ENCODE measurements at regions of chr1 and their contacts with region 1.

Region 1: DNA sequence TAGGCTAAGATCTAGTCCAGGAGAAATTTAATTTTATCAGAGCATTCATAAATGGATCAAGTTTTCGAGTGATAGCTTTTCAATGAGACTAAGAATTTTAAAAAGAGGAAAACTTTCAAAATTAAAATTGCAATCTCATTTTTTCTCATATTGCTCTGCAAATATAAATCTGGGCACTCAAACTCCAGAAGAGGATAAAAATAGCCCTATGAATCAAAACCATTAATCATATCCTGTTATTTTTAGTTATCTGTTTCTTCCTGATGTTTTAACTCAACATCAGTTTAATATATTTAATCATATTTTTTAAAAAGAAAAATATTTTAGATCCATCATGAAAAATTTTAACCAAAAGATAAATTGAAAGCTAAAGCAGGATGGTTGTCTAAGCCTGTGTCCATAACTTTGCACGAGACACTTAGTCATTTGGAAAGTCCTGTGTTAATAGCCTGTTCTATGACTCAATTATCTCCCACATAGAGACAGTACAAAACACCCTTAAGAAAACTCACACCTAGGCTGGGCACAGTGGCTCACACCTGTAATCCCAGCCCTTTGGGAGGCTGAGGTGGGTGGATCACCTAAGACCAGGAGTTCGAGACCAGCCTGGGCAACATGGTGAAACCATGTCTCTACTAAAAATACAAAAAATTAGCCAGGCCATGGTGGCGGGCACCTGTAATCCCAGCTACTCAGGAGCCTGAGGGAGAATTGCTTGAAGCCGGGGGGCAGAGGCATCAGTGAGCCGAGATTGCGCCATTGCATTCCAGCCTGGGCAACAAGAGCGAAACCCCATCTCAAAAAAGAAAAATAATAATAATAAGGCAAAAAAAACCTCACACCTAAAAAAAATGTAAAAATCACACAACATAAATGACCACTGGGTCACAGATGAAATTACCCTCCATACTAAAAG is 17.0 kb upstream of the PRRC2C start:
- DNase-seq: peak; percentile 90
- H3K4me3 ChIP-seq: no peak overlapping the region
- H3K27ac ChIP-seq: peak overlapping the region; percentile 67
- H3K4me1 ChIP-seq: peaks cover 10% of the 10 kb centered on the region
- H3K27me3 ChIP-seq: no peaks in the 10 kb centered on the region
- CTCF ChIP-seq: no peak

Region 2: DNA sequence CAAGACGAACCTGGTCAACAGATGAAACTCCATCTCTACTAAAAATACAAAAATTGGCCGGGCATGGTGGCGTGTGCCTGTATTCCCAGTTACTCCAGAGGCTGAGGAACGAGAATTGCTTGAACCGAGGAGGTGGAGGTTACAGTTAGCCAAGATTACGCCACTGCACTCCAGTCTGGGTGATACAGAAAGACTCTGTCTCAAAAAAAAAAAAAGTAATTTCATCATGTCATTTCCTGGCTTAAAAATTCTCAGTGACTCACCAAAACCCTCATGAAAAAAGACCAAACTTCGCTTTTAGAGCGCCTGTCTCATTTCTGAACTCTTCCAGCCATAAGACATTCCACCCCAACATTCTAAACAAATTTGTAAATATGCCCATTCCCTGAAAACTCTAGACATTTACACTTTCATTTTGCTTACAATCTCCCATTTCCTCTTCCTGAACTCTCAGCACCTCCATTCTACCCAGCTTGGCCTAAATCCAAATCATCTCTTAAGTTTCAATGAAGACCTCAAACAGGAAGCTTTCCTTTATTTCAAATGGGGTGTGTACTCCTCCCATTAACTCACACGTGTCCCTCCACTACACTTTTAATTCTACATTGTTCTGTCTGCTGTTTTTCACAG is 33.5 kb before region 1 on chr1:
- CTCF ChIA-PET with region 1: no interaction called
- dilution Hi-C with region 1: no loop called
- in situ Hi-C with region 1: no loop called
- intact Hi-C with region 1: loop called (anchors 1 kb)
- DNase-seq: peak; percentile 69
- H3K4me3 ChIP-seq: peak overlapping the region in 1 of 3 experiments; percentile 11
- H3K27ac ChIP-seq: peak overlapping the region; percentile 89
- H3K4me1 ChIP-seq: peaks cover 33% of the 10 kb centered on the region
- H3K27me3 ChIP-seq: no peaks in the 10 kb centered on the region
- CTCF ChIP-seq: no peak